Ovary (tissue), 10 donors: ENCODE measurements at regions of chr1 and their contacts with region 1.

Region 1: GRCh38 chr1:56578963-56579875 is at the start of gene PLPP3:
- DNase-seq: peak; percentile 84 to 89 (median 86)
- H3K4me3 ChIP-seq: peak within 1 kb of the TSS; percentile 62
- H3K27ac ChIP-seq: peak within 1 kb of the TSS; percentile 86 to 92
- H3K4me1 ChIP-seq: peaks cover 4% of the 10 kb centered on the region
- H3K27me3 ChIP-seq: no peaks in the 10 kb centered on the region
- CTCF ChIP-seq: peak; percentile 40 to 49 (median 43)
- EP300 ChIP-seq: no peak
- POLR2A ChIP-seq: peak; percentile 84
- total RNA-seq, gene PLPP3: 51.4 to 183 (median 125) TPM

Region 2: DNA sequence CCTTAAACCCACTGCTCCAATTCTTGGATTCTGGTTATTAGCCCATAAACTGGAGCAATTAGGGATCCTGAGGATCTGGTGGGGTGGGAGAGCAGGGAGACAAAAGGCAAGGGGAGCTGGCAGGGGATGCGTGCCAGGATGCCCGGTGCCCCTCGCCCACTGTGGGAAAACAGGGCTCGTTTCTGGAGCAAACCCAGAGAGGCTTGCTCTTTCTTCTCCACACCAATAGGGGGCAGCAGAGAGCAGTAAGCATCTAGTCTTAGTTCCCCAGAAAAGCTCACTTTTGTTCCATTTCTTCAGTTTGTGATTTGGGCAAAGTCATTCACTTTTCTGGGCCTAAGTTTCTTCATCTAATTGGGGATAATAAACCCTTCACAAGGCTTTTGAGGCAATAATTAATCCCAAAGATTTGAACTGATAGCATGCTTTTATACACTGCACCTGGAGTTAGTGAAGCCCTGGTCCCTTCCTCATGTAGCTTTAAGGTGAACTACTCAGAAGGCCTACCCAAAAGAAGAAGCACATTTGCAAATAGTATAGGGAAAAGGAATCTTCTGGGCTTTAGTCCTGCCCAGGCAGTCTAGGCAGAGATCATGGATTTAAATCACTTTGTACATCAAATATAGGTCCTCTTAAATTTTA is 1203.5 kb before region 1 on chr1:
- intact Hi-C with region 1: loop called in 3 of 4 experiments (anchors 5 to 10 kb)
- DNase-seq: peak; percentile 28 to 54 (median 40)
- H3K4me3 ChIP-seq: no peak overlapping the region
- H3K27ac ChIP-seq: no peak overlapping the region
- H3K4me1 ChIP-seq: peaks cover 10% of the 10 kb centered on the region
- H3K27me3 ChIP-seq: no peaks in the 10 kb centered on the region
- CTCF ChIP-seq: peak; percentile 62 to 69 (median 66)
- EP300 ChIP-seq: no peak
- POLR2A ChIP-seq: no peak

Region 3: GRCh38 chr1:55670331-55671082 is 908.7 kb before region 1 on chr1:
- intact Hi-C with region 1: loop called in 1 of 4 experiments (anchors 10 kb)
- DNase-seq: no peak
- H3K4me3 ChIP-seq: no peak overlapping the region
- H3K27ac ChIP-seq: peak overlapping the region in 1 of 2 donors; percentile 52
- H3K4me1 ChIP-seq: peaks cover 12% of the 10 kb centered on the region
- H3K27me3 ChIP-seq: no peaks in the 10 kb centered on the region
- CTCF ChIP-seq: peak in 1 of 3 donors; percentile 1
- EP300 ChIP-seq: no peak
- POLR2A ChIP-seq: no peak

Region 4: GRCh38 chr1:55727010-55727409 is 852.2 kb before region 1 on chr1:
- intact Hi-C with region 1: loop called in 1 of 4 experiments (anchors 10 kb)
- DNase-seq: no peak
- H3K4me3 ChIP-seq: no peak overlapping the region
- H3K27ac ChIP-seq: no peak overlapping the region
- H3K4me1 ChIP-seq: peaks cover 5% of the 10 kb centered on the region
- H3K27me3 ChIP-seq: no peaks in the 10 kb centered on the region
- CTCF ChIP-seq: no peak
- EP300 ChIP-seq: no peak
- POLR2A ChIP-seq: no peak

Region 5: DNA sequence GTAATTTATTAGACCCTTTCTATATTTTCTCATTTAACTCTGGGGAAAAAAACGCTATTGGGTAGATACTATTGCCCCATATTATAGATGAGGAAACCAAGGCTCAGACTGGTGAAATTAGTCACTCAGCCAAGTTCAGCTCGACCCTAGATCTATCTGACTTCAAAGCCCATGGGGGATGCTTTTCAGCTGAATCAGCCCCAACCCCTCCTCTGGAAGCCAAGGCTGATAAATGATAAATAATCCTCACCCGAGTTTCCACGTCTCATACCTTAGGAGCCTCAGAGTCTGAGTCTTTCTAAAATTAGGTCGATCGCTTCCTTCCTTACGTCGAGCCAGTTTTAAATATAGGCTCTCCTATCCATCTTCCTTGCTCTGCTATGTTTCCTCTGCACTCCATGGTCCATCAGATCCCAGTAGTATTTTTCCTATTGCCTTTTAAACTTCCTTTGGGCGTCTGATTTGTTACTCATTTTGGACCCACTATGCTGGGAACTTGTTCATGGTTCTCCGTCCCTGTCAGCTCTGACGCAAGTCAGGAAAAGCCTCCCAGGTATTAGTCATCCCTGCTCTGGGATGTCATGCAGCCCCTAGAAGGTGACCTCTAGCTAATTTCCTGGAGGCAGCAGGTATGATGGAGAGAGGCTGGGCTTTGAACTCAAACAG is 122.7 kb before region 1 on chr1:
- intact Hi-C with region 1: no loop called
- DNase-seq: no peak
- H3K4me3 ChIP-seq: no peak overlapping the region
- H3K27ac ChIP-seq: no peak overlapping the region
- H3K4me1 ChIP-seq: peaks cover 10% of the 10 kb centered on the region
- H3K27me3 ChIP-seq: no peaks in the 10 kb centered on the region
- CTCF ChIP-seq: no peak
- EP300 ChIP-seq: no peak
- POLR2A ChIP-seq: no peak

Region 6: DNA sequence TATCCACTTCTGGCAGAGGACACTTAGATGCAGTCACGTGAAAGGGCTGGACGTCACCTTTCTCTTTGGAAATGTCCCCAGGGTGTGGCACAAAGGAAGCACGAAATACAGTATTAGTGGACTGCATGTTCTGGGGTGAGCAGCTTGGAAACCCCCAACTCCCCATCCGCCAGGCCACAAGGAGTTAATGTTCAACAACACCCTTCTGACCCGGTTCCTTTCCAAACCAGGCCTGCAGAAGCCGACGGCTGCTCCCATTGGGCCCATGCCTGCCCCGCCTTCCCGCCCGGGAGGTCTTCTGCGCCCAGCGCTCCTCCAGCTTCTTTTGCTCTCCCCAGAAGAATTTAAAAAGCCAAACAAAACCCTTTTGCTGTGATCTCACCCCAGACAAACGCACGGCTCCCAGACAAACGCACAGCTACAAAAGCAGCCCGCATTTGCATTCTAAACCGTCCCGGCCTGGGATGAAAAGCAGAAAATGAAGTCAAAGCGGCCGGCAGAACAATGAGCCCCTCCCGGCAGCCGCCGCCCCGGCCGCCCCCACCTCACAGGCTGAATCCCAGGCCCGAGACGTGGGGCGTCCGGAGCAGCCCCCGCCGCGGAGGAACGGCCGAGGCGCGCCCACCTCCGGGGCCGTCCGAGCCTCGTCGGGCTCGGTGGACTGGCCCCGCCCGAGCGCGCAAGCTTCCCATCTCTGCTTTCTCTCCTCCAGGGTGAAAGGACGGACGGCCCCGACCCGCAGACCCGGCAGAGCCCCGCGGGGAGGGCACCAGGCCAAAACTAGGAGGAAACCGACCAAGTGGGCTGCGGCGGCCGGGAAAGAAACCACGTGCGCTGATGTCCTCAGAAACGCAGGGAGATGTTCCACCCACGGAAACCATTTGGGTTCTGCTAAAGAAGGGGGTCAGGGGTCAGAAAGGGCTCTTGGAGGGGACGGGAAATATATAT is 101.8 kb before region 1 on chr1:
- intact Hi-C with region 1: loop called in 2 of 4 experiments (anchors 10 kb)
- DNase-seq: peak; percentile 82 to 91 (median 86)
- H3K4me3 ChIP-seq: peak overlapping the region; percentile 69
- H3K27ac ChIP-seq: peak overlapping the region; percentile 81 to 99
- H3K4me1 ChIP-seq: peaks cover 2% of the 10 kb centered on the region
- H3K27me3 ChIP-seq: no peaks in the 10 kb centered on the region
- CTCF ChIP-seq: no peak
- EP300 ChIP-seq: no peak
- POLR2A ChIP-seq: peak; percentile 34

Region 7: DNA sequence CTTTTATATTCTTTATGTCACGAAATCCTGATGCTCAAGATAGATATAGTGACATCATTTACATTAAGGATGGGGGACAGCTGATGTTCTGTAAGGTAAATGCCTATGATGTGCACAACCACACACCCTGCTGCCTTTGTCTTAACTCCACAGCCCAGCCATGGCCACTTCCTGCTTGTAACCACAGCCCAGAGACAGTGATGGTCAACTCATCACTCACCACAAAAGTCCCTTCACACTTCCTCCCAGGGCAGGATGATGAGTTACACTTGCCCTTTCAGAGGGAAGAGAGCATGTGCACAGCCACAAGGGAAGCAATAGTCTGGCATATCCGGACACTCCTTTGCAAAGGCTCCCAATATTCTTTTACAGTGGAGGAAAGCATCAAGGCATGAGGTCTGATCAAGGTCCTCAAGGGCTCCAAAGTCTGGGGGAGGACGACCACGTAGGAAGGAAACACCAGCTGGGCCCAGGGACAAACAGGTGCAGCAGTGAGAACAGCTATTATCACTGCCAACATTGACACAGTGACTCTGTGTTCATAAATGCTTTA is 53.7 kb before region 1 on chr1:
- intact Hi-C with region 1: loop called in 1 of 4 experiments (anchors 10 kb)
- DNase-seq: no peak
- H3K4me3 ChIP-seq: no peak overlapping the region
- H3K27ac ChIP-seq: no peak overlapping the region
- H3K4me1 ChIP-seq: peaks cover 35% of the 10 kb centered on the region
- H3K27me3 ChIP-seq: no peaks in the 10 kb centered on the region
- CTCF ChIP-seq: no peak
- EP300 ChIP-seq: no peak
- POLR2A ChIP-seq: no peak

Region 8: DNA sequence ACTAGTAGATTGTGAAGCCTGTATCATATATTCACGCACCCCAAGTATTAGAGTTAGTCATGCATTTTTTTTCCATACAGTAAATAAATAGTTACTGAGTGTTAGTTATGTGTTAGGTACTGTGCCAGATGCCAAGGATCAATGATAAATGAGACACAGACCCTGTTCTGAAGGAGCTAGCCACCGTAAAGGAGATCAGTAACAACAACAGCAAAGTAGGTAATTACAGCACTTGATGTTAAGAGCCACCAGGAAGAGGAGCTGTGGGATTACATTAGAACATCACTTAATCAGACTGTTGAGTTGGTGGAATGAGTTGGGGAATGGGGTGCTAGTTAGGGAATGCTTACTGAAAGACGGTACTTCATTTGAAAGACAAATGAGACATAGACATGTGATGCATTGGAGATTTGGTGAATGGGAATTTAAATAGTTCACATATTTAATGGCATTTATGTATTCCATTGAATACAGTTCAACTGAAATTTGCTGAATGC is 86.9 kb after region 1 on chr1:
- intact Hi-C with region 1: no loop called
- DNase-seq: no peak
- H3K4me3 ChIP-seq: no peak overlapping the region
- H3K27ac ChIP-seq: no peak overlapping the region
- H3K4me1 ChIP-seq: peaks cover 1% of the 10 kb centered on the region
- H3K27me3 ChIP-seq: no peaks in the 10 kb centered on the region
- CTCF ChIP-seq: no peak
- EP300 ChIP-seq: no peak
- POLR2A ChIP-seq: no peak